ENCODE measurements at regions of chr12 and their contacts with region 1.

Region 1: GRCh38 chr12:50504798-50505385 is at the start of gene DIP2B:
- DNase-seq: peak; percentile 84
- ATAC-seq: peak; percentile 80
- H3K4me3 ChIP-seq: peak within 1 kb of the TSS; percentile 89 to 98 (median 90)
- H3K27ac ChIP-seq: peak within 1 kb of the TSS; percentile 93
- H3K4me1 ChIP-seq: peaks cover 41% of the 10 kb centered on the region
- H3K27me3 ChIP-seq: no peaks in the 10 kb centered on the region; a peak in 1 of 5 replicates
- CTCF ChIP-seq: peak; percentile 98
- EP300 ChIP-seq: no peak; a peak in 1 of 4 replicates
- POLR2A ChIP-seq: peak in 1 of 2 experiments; percentile 32; a peak in 1 of 4 replicates
- RAD21 ChIP-seq: peak; percentile 98
- total RNA-seq, gene DIP2B: 35.8 and 52.4 TPM in 2 replicates

Region 2: DNA sequence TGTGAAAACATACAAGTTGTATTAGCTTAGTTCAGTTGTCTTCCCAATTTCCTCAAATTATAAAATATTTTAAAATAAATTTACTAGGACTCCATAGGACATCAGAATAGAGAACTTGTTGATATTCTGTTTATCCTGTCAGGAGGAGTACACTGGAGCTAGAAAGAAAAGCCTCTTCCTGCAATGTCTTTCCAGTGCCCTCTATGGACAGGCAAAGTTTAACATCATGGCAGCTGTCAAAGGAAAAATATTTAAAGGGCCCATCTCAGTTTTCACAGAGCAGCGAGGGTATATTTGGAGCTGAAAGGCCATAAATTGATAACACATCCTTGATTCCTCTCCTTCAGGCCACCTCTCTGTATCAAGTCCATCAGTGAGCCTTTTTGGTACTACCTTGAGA is 18.9 kb after region 1 on chr12:
- CTCF ChIA-PET with region 1: no interaction called
- POLR2A ChIA-PET with region 1: interaction called, 27 read pairs
- in situ Hi-C with region 1: no loop called
- intact Hi-C with region 1: loop called (anchors 2 kb)
- DNase-seq: no peak
- ATAC-seq: no peak
- H3K4me3 ChIP-seq: no peak overlapping the region
- H3K27ac ChIP-seq: peak overlapping the region; percentile 99
- H3K4me1 ChIP-seq: peaks cover 88% of the 10 kb centered on the region
- H3K27me3 ChIP-seq: no peaks in the 10 kb centered on the region
- CTCF ChIP-seq: no peak
- EP300 ChIP-seq: no peak
- POLR2A ChIP-seq: no peak
- RAD21 ChIP-seq: no peak

Region 3: DNA sequence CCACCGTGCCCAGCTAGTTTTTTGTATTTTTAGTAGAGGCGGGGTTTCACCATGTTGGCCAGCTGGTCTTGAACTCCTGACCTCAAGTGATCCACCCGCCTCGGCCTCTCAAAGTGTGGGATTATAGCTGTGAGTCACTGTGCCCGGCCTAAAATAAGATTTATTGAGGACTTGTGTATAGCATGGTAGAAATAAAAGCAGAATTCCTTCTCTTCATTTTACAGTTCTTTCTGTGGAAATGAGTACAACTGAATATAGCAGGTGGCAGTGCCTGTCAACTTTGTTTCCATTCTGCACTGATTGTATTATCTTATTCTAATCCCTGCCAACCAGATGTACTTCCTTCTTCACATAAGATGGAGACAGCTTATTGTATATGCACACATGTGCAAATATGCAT is 40.9 kb after region 1 on chr12:
- CTCF ChIA-PET with region 1: no interaction called
- POLR2A ChIA-PET with region 1: interaction called, 8 read pairs
- in situ Hi-C with region 1: no loop called
- intact Hi-C with region 1: loop called (anchors 5 kb)
- DNase-seq: no peak
- ATAC-seq: no peak
- H3K4me3 ChIP-seq: no peak overlapping the region
- H3K27ac ChIP-seq: peak overlapping the region; percentile 78
- H3K4me1 ChIP-seq: peaks cover 76% of the 10 kb centered on the region
- H3K27me3 ChIP-seq: no peaks in the 10 kb centered on the region
- CTCF ChIP-seq: no peak
- EP300 ChIP-seq: no peak
- POLR2A ChIP-seq: no peak
- RAD21 ChIP-seq: no peak

Region 4: DNA sequence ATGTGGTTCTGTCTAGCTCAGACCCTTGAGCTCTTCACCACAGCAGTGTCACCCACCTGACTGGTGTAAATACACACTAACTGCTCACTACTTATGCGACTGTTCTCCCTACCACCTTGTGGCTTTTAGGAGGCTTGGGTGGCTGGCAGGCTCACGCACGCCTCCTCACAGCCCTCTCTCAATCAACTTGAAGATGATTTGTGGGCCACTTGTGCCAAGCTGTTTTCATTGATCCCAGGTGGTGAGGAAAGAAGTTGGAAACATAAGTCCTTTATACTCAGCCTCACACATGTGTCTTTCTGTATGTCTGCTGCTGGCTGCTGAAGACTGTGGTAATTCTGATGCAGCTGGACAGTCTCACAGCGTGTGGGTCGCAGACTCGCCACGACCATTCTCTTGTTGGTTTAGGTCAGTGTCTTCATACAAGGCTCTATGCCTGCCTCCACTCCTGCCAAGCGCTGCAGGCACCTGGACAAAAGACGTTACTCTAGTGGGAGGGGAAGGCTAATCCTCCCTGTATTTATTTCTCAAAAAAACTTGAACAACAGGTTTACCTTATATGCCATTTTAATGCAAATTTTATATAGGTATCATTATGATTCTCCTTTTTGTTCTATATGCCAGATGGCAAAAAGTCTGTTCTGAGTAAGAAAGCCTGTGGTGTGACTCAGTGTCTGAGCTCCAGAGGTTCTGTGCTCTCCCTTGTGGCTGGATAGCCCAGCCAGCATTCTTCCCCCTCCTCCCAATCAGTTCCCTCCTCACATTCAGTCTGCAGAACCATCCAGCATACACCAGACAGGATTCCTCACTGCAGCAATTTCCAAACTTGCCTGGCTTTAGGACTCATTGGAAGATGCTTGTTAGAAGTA is 115.5 kb after region 1 on chr12:
- CTCF ChIA-PET with region 1: no interaction called
- POLR2A ChIA-PET with region 1: no interaction called
- in situ Hi-C with region 1: no loop called
- intact Hi-C with region 1: loop called (anchors 5 kb)
- DNase-seq: no peak
- ATAC-seq: peak; percentile 50
- H3K4me3 ChIP-seq: no peak overlapping the region
- H3K27ac ChIP-seq: peak overlapping the region; percentile 6
- H3K4me1 ChIP-seq: peaks cover 54% of the 10 kb centered on the region
- H3K27me3 ChIP-seq: no peaks in the 10 kb centered on the region
- CTCF ChIP-seq: no peak
- EP300 ChIP-seq: no peak
- POLR2A ChIP-seq: no peak
- RAD21 ChIP-seq: no peak

Region 5: DNA sequence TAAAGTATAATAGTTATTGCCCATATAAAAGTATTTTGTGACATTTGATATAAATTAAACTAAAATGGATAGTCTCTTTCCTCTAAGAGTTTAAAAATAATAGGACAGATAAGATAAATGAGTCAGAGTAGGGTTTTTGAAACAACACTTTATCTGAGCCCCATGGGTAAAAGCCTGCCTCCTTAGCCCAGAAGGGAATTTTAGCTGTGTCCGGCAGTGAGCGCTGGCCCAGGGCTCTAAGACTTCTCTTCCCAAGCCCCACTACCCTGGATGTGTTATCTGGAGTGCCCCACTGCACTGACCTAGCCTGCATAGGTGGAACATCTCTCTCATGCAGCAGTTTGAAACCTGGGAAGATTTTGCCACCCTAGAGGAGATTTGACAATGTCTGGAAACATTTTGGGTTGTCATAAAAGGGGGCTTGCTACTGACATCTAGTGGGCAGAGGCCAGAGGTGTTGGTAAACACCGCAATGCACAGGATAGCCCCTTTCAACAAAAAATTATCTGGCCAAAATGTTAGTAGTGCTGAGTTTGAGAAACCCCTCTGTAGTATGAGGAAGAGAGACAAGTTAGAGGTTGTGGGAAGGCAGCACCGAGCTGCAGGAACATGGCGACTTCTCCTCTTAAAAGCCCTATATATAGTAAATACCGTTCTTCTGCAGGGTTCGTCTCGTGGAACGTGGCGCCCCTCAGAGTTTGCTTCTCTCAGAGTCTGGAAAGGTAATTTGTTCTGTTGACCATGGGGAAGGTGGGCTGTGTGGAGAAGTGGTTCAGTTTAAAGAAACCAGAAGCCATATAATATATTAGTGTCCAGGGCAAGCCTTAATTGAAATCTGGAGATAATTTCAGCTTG is 229.7 kb after region 1 on chr12:
- CTCF ChIA-PET with region 1: no interaction called
- POLR2A ChIA-PET with region 1: no interaction called
- in situ Hi-C with region 1: no loop called
- intact Hi-C with region 1: loop called (anchors 10 kb)
- DNase-seq: peak; percentile 25
- ATAC-seq: peak; percentile 78
- H3K4me3 ChIP-seq: no peak overlapping the region
- H3K27ac ChIP-seq: no peak overlapping the region
- H3K4me1 ChIP-seq: no peaks in the 10 kb centered on the region
- H3K27me3 ChIP-seq: no peaks in the 10 kb centered on the region; a peak in 1 of 5 replicates
- CTCF ChIP-seq: peak; percentile 62
- EP300 ChIP-seq: no peak
- POLR2A ChIP-seq: no peak
- RAD21 ChIP-seq: peak; percentile 32; the same call in 1 of the 2 replicates

Measured in HepG2 (cell line).